MCF 10A (cell line): ENCODE measurements at regions of chr3 and their contacts with region 1.

Region 1: GRCh38 chr3:124351430-124352148 is 359.7 kb upstream of the ROPN1 start:
- DNase-seq: peak; percentile 64
- H3K4me3 Mint-ChIP-seq: no peak overlapping the region
- H3K27ac Mint-ChIP-seq: no peak overlapping the region
- H3K4me1 Mint-ChIP-seq: no peaks in the 10 kb centered on the region
- H3K27me3 Mint-ChIP-seq: peaks cover 81% of the 10 kb centered on the region
- CTCF ChIP-seq: peak; percentile 65

Region 2: GRCh38 chr3:124315215-124316033 is 36.2 kb before region 1 on chr3:
- CTCF ChIA-PET with region 1: interaction called, 10 read pairs
- POLR2A ChIA-PET with region 1: no interaction called
- intact Hi-C with region 1: loop called (anchors 1 kb)
- DNase-seq: peak; percentile 58
- H3K4me3 Mint-ChIP-seq: no peak overlapping the region
- H3K27ac Mint-ChIP-seq: no peak overlapping the region
- H3K4me1 Mint-ChIP-seq: no peaks in the 10 kb centered on the region
- H3K27me3 Mint-ChIP-seq: peaks cover 27% of the 10 kb centered on the region
- CTCF ChIP-seq: no peak

Region 3: DNA sequence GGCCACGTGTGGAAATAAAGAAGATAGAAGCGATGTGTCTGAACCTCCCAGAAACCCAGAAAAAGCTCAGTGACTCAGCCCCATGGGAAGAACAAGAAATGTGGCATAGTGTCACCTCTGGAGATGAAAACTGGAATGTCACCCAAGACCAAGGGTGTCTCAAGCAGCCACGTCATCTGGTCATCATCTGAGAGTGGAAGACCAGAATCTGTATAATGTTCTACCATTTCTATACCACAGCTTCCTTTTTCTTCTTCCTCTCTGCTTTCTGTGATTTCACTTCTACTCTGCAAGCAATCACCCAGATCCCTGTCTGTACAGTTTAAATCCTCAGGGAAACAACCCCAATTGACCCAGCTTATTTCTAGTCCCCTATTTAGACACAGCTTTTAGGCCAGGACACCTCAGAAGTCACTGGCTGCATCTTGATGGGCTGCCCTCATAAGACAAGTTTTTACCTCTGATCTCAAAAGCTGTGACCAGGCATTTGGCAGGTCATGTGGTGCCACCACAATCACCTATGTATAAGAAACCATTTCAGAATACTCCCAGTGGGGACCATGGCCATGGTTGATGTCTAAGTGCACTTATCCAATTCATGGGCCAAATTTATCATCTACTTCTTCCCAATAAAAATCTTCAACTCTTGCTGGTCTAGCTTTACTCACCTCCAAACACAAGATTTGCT is 100.2 kb after region 1 on chr3:
- CTCF ChIA-PET with region 1: interaction called, 22 read pairs
- POLR2A ChIA-PET with region 1: no interaction called
- intact Hi-C with region 1: no loop called
- DNase-seq: no peak
- H3K4me3 Mint-ChIP-seq: no peak overlapping the region
- H3K27ac Mint-ChIP-seq: no peak overlapping the region
- H3K4me1 Mint-ChIP-seq: no peaks in the 10 kb centered on the region
- H3K27me3 Mint-ChIP-seq: peaks cover 93% of the 10 kb centered on the region
- CTCF ChIP-seq: no peak

Region 4: DNA sequence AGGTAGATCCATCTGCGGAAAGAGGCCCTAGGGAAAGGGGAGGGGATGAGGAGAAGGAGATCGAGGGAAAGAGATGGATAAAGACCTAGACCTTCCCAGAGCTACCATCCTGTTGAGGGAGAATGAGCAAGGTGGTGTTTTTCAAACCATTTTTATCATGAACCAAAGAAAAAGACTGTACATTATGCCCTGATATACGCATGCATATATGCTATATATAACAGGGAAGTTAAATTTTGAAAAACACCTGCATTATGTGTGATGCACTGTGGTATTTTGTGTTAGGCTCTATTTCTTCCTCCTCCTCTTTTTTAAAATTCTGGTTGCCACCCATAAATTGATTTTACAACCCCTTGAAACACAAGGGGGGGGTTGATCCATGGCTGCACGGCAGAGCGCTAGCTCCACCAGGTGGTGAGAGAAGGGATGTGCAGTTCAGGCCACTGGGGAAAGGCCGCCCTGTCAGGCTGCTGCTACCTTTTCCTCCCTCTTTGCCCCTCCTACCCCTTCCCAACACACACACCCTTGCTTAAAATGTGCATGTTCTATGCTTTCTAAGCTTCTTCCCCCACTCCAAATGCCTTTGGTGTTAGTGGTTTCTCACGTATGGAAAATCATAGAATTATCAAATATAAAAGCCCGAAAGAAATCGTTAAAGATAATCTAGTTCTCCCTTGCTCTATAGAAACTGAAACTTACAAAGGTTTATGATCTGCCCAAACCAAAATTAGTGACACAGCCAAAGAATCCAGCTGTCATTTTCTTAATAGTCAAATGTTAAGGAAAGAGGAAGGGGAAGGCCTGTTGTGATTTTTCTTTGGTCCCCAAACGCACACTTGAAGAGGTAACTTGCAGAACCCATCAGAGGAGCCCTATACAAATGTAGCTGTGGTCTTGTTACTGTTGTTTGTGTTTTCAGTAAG is 116.7 kb after region 1 on chr3:
- CTCF ChIA-PET with region 1: interaction called, 279 read pairs
- POLR2A ChIA-PET with region 1: interaction called, 3 read pairs
- intact Hi-C with region 1: loop called (anchors 1 kb)
- DNase-seq: peak; percentile 62
- H3K4me3 Mint-ChIP-seq: no peak overlapping the region
- H3K27ac Mint-ChIP-seq: no peak overlapping the region
- H3K4me1 Mint-ChIP-seq: no peaks in the 10 kb centered on the region
- H3K27me3 Mint-ChIP-seq: peaks cover 90% of the 10 kb centered on the region
- CTCF ChIP-seq: peak; percentile 99

Region 5: DNA sequence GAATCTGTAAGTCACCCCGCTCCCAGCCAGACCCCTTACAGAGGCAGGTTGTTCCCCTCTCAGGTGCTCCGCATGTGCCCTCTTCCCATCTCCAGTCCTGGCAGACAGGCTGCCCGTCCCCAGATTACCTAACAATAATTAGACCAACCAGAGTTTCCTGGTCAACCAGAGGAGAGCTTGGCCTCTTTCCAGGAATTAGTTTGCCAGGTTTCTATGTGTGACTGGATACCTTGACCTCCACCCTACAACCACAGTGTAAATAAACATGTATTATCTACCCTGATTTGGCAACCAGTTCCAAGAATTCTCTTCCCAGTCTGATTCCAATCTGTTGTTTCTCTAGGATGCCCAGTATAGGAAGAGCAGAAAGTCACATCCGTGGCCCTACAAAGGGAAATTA is 200.7 kb after region 1 on chr3:
- CTCF ChIA-PET with region 1: interaction called, 46 read pairs
- POLR2A ChIA-PET with region 1: no interaction called
- intact Hi-C with region 1: loop called (anchors 1 kb)
- DNase-seq: peak; percentile 89
- H3K4me3 Mint-ChIP-seq: no peak overlapping the region
- H3K27ac Mint-ChIP-seq: no peak overlapping the region
- H3K4me1 Mint-ChIP-seq: peaks cover 8% of the 10 kb centered on the region
- H3K27me3 Mint-ChIP-seq: peaks cover 80% of the 10 kb centered on the region
- CTCF ChIP-seq: no peak